ENCODE measurements at regions of chr16 and their contacts with region 1.

Region 1: DNA sequence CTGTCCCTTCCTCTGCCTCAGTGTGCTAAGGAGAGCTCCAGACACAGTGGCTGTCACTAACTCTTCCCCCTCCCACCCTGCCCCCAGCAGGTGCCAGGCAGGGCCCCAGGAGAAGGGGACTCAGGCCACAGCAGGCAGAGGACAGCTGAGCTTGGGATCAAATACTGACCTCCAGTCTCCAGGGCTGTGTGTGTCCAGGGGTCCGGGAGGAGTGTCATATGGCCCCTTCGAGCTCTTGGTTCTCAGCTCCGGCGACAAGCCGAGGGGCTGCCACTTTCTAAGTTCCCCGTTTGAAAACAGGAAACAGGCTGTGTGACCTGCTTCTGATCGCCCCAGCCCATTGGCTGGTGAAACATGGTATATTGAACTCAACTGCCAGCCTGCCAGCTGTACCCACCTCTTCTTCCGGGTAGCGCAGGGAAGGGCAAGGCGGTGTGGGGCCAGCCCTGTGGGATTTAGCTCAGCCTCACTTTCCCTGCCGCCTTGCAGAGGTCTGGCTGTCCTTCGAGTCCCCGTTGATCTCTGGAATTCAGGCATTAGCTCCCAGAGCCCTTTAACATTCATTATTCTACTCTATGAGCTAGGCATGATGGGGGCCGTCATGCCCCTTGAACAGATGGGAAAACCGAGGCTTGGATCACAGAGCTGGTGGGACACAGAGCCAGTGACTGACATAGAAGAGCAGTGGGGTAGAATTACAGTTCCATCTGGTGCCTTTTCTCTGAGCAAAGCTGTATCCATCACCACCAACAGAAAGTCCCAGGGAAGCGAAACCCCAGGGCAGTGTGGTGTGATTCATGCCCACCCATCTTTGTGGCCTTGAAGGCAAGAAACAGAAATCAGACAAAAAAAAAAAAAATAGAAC is at the start of gene SNX20:
- DNase-seq: peak; percentile 79
- H3K4me3 Mint-ChIP-seq: peak within 1 kb of the TSS; percentile 88
- H3K27ac Mint-ChIP-seq: peak within 1 kb of the TSS; percentile 91
- H3K4me1 Mint-ChIP-seq: peaks cover 89% of the 10 kb centered on the region
- H3K27me3 Mint-ChIP-seq: no peaks in the 10 kb centered on the region
- total RNA-seq, gene SNX20: 83.9 to 98.5 TPM

Region 2: DNA sequence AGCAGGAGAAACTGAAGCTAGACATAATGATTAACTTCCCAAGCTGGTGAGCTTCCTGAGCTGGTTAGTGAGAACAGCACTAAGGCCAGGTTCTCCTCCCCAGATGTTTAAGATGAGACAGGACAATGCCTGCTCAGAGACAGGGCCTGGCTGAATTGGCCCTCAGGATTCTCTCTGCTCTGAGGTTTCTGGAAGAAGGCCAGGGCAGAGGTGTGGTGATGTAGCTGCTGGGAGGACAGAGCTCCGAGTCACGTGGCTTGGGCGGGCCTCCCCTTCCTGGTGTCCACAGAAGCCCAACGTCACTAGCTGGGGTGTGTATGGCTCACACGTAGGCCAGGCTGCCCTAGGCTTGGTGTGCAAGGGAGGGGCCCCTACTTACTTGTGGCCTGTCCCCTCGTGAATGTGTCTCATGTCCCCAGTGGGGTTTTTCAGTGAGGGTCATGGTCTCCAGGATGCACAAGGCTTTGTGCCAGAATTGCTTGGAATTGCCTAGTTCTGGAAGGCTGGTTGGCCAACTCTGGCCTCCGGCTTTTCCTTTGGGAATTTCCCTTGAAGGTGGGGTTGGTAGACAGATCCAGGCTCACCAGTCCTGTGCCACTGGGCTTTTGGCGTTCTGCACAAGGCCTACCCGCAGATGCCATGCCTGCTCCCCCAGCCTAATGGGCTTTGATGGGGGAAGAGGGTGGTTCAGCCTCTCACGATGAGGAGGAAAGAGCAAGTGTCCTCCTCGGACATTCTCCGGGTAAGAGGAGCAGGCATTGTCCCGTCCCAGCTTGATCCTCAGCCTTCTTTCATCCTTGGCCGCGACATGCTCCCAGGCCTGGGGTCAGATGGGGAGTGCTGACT is 15.5 kb after region 1 on chr16:
- CTCF ChIA-PET with region 1: interaction called, 24 read pairs
- POLR2A ChIA-PET with region 1: no interaction called
- DNase-seq: peak; percentile 41
- H3K4me3 Mint-ChIP-seq: peak overlapping the region; percentile 62
- H3K27ac Mint-ChIP-seq: peak overlapping the region; percentile 86
- H3K4me1 Mint-ChIP-seq: peaks cover 71% of the 10 kb centered on the region
- H3K27me3 Mint-ChIP-seq: peaks cover 4% of the 10 kb centered on the region

Region 3: DNA sequence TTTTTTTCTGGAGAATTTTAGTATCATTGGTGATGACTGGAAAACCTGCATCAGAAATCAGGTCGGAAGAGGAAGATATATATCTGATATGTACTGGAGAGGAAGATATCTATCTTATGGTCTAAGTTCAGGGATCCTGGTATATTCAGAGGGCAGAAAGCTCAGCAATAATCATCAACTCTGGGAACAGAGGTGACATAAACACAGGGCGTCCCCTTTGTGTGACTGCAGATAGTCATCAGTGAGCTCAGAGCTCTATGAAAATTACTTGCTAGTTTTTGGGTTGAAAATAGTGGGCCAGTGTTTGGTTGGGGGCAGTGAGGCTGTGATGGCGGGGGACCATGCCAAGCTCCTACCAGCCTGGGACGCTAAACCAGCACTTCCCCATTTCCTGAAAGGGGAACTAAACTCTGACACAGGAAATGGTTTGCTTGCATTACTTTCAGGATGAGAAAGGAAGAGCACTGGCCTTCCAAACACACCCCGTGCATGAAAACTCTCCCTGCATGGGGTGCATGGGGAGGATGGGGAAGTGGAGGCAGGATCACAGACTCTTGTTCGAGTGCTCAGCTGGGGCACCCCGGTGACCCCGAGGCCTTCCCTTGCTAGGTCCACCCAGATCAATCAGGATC is 27.9 kb after region 1 on chr16:
- CTCF ChIA-PET with region 1: no interaction called
- POLR2A ChIA-PET with region 1: no interaction called
- DNase-seq: no peak
- H3K4me3 Mint-ChIP-seq: no peak overlapping the region
- H3K27ac Mint-ChIP-seq: peak overlapping the region; percentile 25
- H3K4me1 Mint-ChIP-seq: peaks cover 33% of the 10 kb centered on the region
- H3K27me3 Mint-ChIP-seq: no peaks in the 10 kb centered on the region

Measured in activated CD4-positive, alpha-beta T cell treated with anti-CD3 and anti-CD28 coated beads, Interleukin-2, amount 10 ng/mL, durations not matched to agents 7 days and 5 days (primary cell).